Activated T-helper 2 cell treated with anti-CD3 and anti-CD28 coated beads, Interferon-gamma antibody, Interleukin-2, Interleukin-4, amounts not matched to agents 10 μg/mL and 5 μg/mL and 100 μg/mL, durations not matched to agents 14 hours and 24 hours and 36 hours (primary cell): ENCODE measurements at regions of chr21 and their contacts with region 1.

Region 1: DNA sequence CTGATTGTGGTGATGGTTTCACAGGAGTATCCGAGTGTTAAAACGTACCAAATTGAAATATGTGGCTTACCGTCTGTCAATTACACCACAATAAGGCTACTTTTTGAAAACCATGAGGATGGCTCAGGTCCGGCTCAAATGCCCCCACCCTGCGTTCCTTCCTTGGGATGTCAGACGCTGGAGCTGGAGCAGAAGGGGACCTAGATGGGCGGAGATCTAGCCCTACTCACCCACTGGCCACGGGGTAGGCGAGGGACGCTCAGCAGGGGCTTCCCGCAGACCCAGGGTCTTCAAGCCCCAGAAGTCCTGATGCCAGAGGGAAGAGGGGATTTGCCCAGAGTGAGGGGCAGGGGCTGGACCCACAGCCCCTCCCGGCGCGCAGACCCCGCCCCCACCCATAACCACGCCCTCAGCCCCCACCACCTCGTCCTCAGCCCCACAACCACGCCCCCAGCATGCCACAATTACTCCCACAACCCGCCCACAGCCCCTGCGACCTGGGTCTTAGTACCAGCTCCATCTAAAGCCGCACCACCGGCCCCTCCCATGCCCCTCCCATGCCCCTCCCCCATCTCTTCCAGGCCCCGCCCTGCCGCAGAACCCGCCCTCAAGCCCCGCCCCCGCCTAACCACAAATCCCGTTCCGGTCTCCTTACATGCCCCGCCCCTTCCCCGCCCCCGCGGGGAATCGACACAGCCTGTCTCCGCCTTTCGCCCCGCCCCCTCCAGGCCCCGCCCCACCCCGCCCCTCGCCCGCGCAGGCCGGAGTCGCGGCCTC is at the start of gene LRRC3:
- DNase-seq: peak; percentile 68
- H3K4me3 Mint-ChIP-seq: peak within 1 kb of the TSS; percentile 76
- H3K27ac Mint-ChIP-seq: no peak within 1 kb of the TSS
- H3K4me1 Mint-ChIP-seq: peaks cover 3% of the 10 kb centered on the region
- H3K27me3 Mint-ChIP-seq: peaks cover 13% of the 10 kb centered on the region
- total RNA-seq, gene LRRC3: 2.2 and 2.3 TPM in 2 replicates

Region 2: GRCh38 chr21:44338971-44339910 is 115.7 kb before region 1 on chr21 and contains the start of gene CFAP410:
- intact Hi-C with region 1: no loop called
- DNase-seq: peak; percentile 95
- H3K4me3 Mint-ChIP-seq: peak within 1 kb of the TSS; percentile 93
- H3K27ac Mint-ChIP-seq: peak within 1 kb of the TSS; percentile 91
- H3K4me1 Mint-ChIP-seq: peaks cover 19% of the 10 kb centered on the region
- H3K27me3 Mint-ChIP-seq: no peaks in the 10 kb centered on the region
- total RNA-seq, gene CFAP410: 13.8 and 15.2 TPM in 2 replicates

Region 3: DNA sequence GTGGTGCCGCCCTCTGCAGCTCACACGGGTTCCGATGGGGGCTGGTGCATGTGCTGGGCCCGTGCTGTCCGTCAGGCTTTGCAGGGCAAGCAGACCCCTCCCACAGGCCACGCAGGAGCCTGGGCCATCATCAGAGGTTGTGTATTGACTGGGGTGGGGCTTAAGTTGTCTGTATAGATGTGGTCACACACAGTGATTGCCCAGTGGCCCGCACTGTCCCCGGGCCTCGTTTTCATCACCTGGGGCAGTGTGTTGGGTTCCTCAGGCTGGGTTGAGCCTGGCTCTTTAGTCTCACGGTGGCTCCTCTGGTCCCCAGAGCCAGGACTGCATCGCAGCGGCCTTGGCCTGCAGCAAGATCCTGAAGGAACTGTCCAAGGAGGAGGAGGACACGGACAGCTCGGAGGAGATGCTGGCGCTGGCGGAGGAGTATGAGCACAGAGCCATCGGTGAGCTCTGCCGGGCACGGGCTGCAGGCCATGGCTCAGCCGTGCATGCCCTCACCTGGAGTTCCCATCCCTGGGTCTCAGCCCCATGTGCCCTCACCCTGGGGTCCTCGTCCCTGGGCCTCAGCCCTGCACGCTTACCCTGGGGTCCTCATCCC is 57.4 kb before region 1 on chr21:
- intact Hi-C with region 1: no loop called
- DNase-seq: no peak
- H3K4me3 Mint-ChIP-seq: no peak overlapping the region
- H3K27ac Mint-ChIP-seq: no peak overlapping the region
- H3K4me1 Mint-ChIP-seq: no peaks in the 10 kb centered on the region
- H3K27me3 Mint-ChIP-seq: no peaks in the 10 kb centered on the region

Region 4: DNA sequence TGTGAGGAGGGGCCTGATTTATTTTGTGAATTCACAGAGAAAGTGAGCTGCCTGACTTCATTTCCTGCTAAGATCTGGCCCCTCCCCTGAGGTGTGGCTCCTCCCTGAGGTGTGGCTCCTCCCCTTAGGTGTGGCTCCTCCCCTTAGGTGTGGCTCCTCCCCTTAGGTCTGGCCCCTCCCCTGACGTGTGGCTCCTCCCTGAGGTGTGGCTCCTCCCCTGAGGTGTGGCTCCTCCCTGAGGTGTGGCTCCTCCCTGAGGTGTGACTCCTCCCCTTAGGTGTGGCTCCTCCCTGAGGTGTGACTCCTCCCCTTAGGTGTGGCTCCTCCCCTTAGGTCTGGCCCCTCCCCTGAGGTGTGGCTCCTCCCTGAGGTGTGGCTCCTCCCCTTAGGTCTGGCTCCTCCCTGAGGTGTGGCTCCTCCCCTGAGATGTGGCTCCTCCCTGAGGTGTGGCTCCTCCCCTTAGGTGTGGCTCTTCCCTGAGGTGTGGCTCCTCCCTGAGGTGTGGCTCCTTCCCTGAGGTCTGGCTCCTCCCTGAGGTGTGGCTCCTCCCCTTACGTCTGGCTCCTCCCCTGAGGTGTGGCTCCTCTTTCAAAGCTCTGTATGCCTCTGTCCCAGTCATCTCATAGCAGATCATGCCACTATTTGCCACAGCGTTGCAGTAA is 26.5 kb before region 1 on chr21:
- intact Hi-C with region 1: loop called (anchors 1 kb)
- DNase-seq: peak; percentile 50
- H3K4me3 Mint-ChIP-seq: no peak overlapping the region
- H3K27ac Mint-ChIP-seq: no peak overlapping the region
- H3K4me1 Mint-ChIP-seq: no peaks in the 10 kb centered on the region
- H3K27me3 Mint-ChIP-seq: no peaks in the 10 kb centered on the region